Pancreas (tissue), 10 donors: ENCODE measurements at regions of chr15 and their contacts with region 1.

Region 1: GRCh38 chr15:86743283-86743903 is 663.7 kb downstream of the AGBL1 start:
- DNase-seq: peak in 5 of 6 donors; percentile 6 to 62 (median 22)
- ATAC-seq: peak in 2 of 4 donors; percentile 42 to 58
- H3K4me3 ChIP-seq: no peak overlapping the region
- H3K27ac ChIP-seq: no peak overlapping the region
- H3K4me1 ChIP-seq: no peaks in the 10 kb centered on the region
- H3K27me3 ChIP-seq: no peaks in the 10 kb centered on the region
- CTCF ChIP-seq: peak; percentile 13 to 51 (median 40)

Region 2: DNA sequence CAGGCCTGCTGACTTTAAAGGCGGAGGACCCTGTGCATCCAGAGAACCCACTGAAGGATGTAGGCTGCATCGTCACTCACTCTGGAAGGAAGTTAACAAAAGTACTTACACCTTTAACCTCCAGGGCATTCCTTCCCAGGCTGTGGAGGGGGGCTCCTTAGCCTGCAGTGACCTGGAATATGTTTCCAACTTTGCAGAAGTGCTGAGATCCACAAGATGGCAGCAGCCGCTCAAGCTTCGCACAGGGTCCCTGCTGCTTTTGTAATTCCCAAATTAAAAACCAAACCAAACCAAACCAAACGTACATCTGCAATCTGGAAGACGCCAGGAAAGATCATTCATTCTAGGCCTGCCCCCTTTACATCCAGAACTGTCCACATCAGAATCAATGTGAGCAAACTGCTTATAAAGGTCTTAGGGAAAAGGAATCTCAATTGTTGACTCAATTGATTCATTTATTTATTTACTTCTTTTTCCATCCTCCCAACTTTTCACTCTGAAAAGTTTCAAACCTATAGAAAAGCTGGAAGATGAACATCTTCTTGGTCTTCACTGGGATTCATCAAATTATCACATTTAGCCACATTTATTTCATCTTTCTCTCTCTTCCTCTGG is 878.2 kb before region 1 on chr15:
- intact Hi-C with region 1: loop called in 1 of 3 experiments (anchors 10 kb)
- DNase-seq: no peak
- ATAC-seq: peak in 3 of 4 donors; percentile 53 to 69 (median 54)
- H3K4me3 ChIP-seq: no peak overlapping the region
- H3K27ac ChIP-seq: no peak overlapping the region
- H3K4me1 ChIP-seq: no peaks in the 10 kb centered on the region
- H3K27me3 ChIP-seq: no peaks in the 10 kb centered on the region
- CTCF ChIP-seq: peak in 3 of 4 donors; percentile 16 to 23 (median 22)